Aorta (tissue), 5 donors: ENCODE measurements at regions of chr11 and their contacts with region 1.

Region 1: DNA sequence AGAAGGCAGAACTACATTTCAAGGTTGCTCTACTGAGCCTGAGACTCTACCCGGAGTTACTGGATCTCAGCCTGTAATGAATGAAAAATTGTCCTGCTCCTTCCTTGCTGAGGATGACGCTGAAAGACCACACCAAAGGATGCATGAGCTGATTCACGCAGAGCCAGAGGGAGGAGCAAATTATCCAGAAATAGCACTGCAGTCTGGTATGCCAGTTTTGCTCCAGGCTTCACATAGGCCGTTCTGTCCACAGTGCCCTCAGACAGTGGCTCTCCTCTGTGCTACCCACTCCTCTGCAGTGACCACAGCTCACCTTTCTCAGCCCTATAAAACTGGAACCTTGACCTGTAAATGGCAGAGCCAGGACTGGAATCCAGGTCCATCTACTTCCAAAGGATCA is 79.3 kb upstream of the GALNT18 start:
- DNase-seq: no peak
- ATAC-seq: no peak
- H3K4me3 ChIP-seq: no peak overlapping the region
- H3K27ac ChIP-seq: no peak overlapping the region
- H3K4me1 ChIP-seq: no peaks in the 10 kb centered on the region
- H3K27me3 ChIP-seq: peaks cover 0 to 1% of the 10 kb centered on the region in 2 donors

Region 2: GRCh38 chr11:11777897-11778296 is 76.8 kb after region 1 on chr11:
- intact Hi-C with region 1: loop called in 1 of 2 experiments (anchors 10 kb)
- DNase-seq: no peak
- ATAC-seq: no peak
- H3K4me3 ChIP-seq: no peak overlapping the region
- H3K27ac ChIP-seq: no peak overlapping the region
- H3K4me1 ChIP-seq: no peaks in the 10 kb centered on the region
- H3K27me3 ChIP-seq: no peaks in the 10 kb centered on the region